Mammary epithelial cell (primary cell): ENCODE measurements at regions of chr14 and their contacts with region 1.

Region 1: GRCh38 chr14:64986578-64987571 is at the start of gene FNTB:
- DNase-seq: peak; percentile 95
- H3K4me3 ChIP-seq: peak within 1 kb of the TSS; percentile 79 to 86 (median 83)
- H3K27ac ChIP-seq: peak within 1 kb of the TSS; percentile 61
- H3K4me1 ChIP-seq: peaks cover 6% of the 10 kb centered on the region
- H3K27me3 ChIP-seq: no peaks in the 10 kb centered on the region
- CTCF ChIP-seq: peak; percentile 95 to 97
- total RNA-seq, gene FNTB: 11.7 to 12.5 TPM

Region 2: GRCh38 chr14:64800000-64800399 is 186.9 kb before region 1 on chr14:
- CTCF ChIA-PET with region 1: no interaction called
- dilution Hi-C with region 1: no loop called
- in situ Hi-C with region 1: no loop called
- intact Hi-C with region 1: loop called (anchors 2 kb)
- DNase-seq: peak; percentile 23
- H3K4me3 ChIP-seq: no peak overlapping the region
- H3K27ac ChIP-seq: no peak overlapping the region
- H3K4me1 ChIP-seq: peaks cover 3% of the 10 kb centered on the region
- H3K27me3 ChIP-seq: no peaks in the 10 kb centered on the region
- CTCF ChIP-seq: peak; percentile 69 to 71

Region 3: DNA sequence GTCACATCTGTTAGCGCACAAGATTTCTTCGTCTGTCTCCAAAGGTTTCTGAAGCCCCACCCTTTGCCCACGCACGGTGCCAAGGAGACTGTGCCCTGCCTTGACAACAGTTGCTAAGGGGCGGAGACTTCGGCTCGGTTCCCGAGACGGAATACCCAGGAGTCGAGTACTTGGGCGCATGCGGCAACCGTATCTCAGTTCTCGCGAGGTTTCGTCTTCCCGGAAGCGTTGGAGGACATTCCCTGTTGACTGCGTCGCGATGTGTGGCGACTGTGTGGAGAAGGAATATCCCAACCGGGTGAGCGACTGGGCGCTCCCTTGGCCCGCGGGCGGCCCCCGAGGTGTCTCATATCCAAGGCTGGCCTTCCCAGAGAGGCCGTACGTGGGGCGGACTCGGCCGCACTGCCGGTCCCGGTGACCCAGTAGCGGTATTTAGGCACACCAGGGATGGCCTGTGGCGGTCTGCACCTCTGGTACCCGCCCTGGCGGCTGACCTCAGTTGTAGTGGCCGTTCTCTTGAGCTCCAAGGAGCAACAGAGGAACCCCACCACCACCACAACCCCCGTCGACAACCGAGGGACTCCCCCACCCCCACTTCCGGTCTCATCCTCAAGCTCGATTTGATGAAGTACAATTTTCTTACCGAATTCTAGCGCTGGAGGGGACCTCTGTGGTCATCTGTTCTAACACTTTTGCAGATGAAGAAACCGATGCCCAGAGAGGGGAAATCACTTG is 72.5 kb before region 1 on chr14 and contains the start of gene CHURC1:
- CTCF ChIA-PET with region 1: no interaction called
- dilution Hi-C with region 1: no loop called
- in situ Hi-C with region 1: no loop called
- intact Hi-C with region 1: loop called (anchors 1 kb)
- DNase-seq: peak; percentile 98
- H3K4me3 ChIP-seq: peak within 1 kb of the TSS; percentile 80 to 89 (median 87)
- H3K27ac ChIP-seq: peak within 1 kb of the TSS; percentile 90
- H3K4me1 ChIP-seq: peaks cover 10% of the 10 kb centered on the region
- H3K27me3 ChIP-seq: no peaks in the 10 kb centered on the region
- CTCF ChIP-seq: no peak
- total RNA-seq, gene CHURC1: 49.9 to 55.7 TPM

Region 4: DNA sequence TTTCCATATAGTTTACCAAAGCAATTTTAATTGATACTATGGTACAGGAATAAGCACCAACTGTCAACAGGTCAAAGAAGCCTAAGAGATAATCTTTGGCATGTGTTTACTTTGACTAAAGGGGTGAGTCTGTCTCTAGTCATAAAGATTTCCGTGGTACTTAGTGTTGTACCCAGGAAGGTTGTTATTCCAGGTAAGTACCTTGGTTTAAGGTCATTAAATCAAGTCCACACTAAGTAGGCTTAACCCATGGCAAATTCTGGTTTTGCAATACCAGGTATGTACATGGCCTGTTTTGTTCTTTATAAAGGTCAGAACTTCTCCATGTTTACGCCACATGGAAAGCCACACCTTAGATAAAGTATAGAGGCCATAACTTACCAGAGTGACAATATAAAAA is 105.5 kb after region 1 on chr14:
- CTCF ChIA-PET with region 1: no interaction called
- dilution Hi-C with region 1: loop called (anchors 5 kb)
- in situ Hi-C with region 1: no loop called
- intact Hi-C with region 1: no loop called
- DNase-seq: no peak
- H3K4me3 ChIP-seq: no peak overlapping the region
- H3K27ac ChIP-seq: no peak overlapping the region
- H3K4me1 ChIP-seq: peaks cover 8% of the 10 kb centered on the region
- H3K27me3 ChIP-seq: no peaks in the 10 kb centered on the region
- CTCF ChIP-seq: no peak

Region 5: DNA sequence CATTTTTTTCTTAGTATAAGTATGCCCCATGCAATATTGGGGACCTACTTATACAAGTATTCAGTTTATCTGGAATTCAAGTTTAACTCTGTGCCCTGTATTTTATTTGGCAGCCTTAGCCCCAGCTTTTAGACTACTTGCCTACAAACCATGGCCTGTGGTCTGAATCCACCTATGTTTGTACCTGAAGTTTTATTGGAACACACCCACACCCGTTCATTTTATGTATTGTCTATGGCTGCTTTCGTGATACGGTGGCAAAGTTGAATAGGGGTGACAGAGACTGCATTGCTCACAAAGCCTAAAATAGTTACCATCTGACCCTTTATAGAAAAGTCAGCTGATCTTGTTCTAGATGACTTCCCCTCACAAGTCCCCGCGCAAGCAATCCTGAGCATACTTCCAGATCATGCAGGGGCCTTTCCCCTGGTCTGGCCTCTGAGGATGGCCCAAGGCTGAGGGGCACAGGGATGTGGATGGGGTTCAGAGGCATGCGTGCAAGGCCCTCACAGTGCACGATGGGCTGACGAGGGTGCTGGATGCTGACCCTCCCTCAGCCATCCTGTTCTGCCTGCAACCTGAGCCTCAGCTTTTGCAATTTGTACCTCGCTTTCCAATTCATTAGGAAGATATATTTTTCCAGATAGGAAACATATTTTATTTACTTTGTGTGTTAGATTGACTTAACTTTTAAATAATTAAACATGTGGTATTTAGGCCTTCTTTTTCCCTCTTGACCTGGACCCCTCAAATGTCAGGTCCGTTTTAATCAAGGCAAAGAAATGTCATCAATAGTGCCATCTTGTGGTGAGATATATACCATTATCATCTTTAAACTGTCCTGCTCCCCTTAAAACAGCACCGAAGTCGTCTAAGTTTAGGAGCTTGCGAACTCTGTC is 972.0 kb after region 1 on chr14:
- CTCF ChIA-PET with region 1: no interaction called
- dilution Hi-C with region 1: no loop called
- in situ Hi-C with region 1: no loop called
- intact Hi-C with region 1: loop called (anchors 10 kb)
- DNase-seq: no peak
- H3K4me3 ChIP-seq: no peak overlapping the region
- H3K27ac ChIP-seq: no peak overlapping the region
- H3K4me1 ChIP-seq: no peaks in the 10 kb centered on the region
- H3K27me3 ChIP-seq: no peaks in the 10 kb centered on the region
- CTCF ChIP-seq: peak; percentile 27 to 54